ENCODE measurements at regions of chr9 and their contacts with region 1.

Region 1: GRCh38 chr9:6353851-6354686 is 25.9 kb downstream of the TPD52L3 start:
- DNase-seq: peak in 1 of 4 donors; percentile 46
- ATAC-seq: peak; percentile 97
- H3K4me3 ChIP-seq: no peak overlapping the region
- H3K27ac ChIP-seq: no peak overlapping the region
- H3K4me1 ChIP-seq: no peaks in the 10 kb centered on the region
- H3K27me3 ChIP-seq: peaks cover 0 to 5% of the 10 kb centered on the region in 2 donors
- CTCF ChIP-seq: peak; percentile 69 to 78

Region 2: GRCh38 chr9:6412487-6413364 is 58.7 kb after region 1 on chr9 and contains the start of gene UHRF2:
- intact Hi-C with region 1: no loop called
- DNase-seq: peak; percentile 98 to 100 (median 99)
- ATAC-seq: peak; percentile 96
- H3K4me3 ChIP-seq: peak within 1 kb of the TSS; percentile 95 to 98
- H3K27ac ChIP-seq: peak within 1 kb of the TSS; percentile 89 to 90
- H3K4me1 ChIP-seq: peaks cover 13 to 36% of the 10 kb centered on the region in 2 donors
- H3K27me3 ChIP-seq: no peaks in the 10 kb centered on the region
- CTCF ChIP-seq: peak in 1 of 2 donors; percentile 30
- polyA plus RNA-seq, gene UHRF2: 66.2 to 86.9 (median 69.2) TPM

Region 3: GRCh38 chr9:6566409-6567139 is 212.5 kb after region 1 on chr9:
- intact Hi-C with region 1: loop called in 1 of 2 experiments (anchors 5 kb)
- DNase-seq: peak in 1 of 4 donors; percentile 36
- ATAC-seq: peak; percentile 78
- H3K4me3 ChIP-seq: no peak overlapping the region
- H3K27ac ChIP-seq: peak overlapping the region in 1 of 2 donors; percentile 14
- H3K4me1 ChIP-seq: peaks cover 0 to 4% of the 10 kb centered on the region in 2 donors
- H3K27me3 ChIP-seq: peaks cover 0 to under 1% of the 10 kb centered on the region in 2 donors
- CTCF ChIP-seq: no peak